Right lobe of liver (tissue), 6 donors: ENCODE measurements at regions of chr7 and their contacts with region 1.

Region 1: GRCh38 chr7:119184124-119184788 is 959.8 kb downstream of the ANKRD7 start:
- DNase-seq: no peak
- ATAC-seq: no peak
- H3K4me3 ChIP-seq: no peak overlapping the region
- H3K27ac ChIP-seq: no peak overlapping the region
- H3K4me1 ChIP-seq: no peaks in the 10 kb centered on the region
- H3K27me3 ChIP-seq: no peaks in the 10 kb centered on the region
- CTCF ChIP-seq: no peak
- POLR2A ChIP-seq: no peak

Region 2: GRCh38 chr7:118918556-118918955 is 265.7 kb before region 1 on chr7:
- intact Hi-C with region 1: loop called in 1 of 2 experiments (anchors 10 kb)
- DNase-seq: no peak
- ATAC-seq: peak in 3 of 4 donors; percentile 45 to 48 (median 46)
- H3K4me3 ChIP-seq: no peak overlapping the region
- H3K27ac ChIP-seq: no peak overlapping the region
- H3K4me1 ChIP-seq: no peaks in the 10 kb centered on the region
- H3K27me3 ChIP-seq: peaks cover 0 to 4% of the 10 kb centered on the region in 2 donors
- CTCF ChIP-seq: peak; percentile 31 to 60 (median 39)
- POLR2A ChIP-seq: no peak

Region 3: DNA sequence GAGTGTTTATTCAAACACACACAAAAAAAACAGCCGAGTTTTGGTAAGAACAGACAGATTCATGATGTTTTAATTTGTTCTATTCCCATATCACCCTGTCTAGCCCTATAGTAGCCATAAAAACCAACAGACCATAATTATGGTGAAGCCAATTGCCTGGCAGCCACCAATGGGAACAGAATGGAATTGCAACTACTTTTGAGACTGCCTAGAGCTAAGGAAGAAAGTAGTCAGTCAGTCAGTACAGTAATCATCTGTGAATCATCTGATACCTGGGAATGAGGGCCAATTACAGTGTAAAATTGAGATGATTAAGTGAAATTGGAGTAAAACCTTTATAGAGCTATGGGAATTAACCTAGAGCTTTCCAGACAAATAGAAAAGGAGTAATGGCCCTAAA is 136.1 kb after region 1 on chr7:
- intact Hi-C with region 1: no loop called
- DNase-seq: no peak
- ATAC-seq: no peak
- H3K4me3 ChIP-seq: no peak overlapping the region
- H3K27ac ChIP-seq: no peak overlapping the region
- H3K4me1 ChIP-seq: no peaks in the 10 kb centered on the region
- H3K27me3 ChIP-seq: no peaks in the 10 kb centered on the region
- CTCF ChIP-seq: no peak
- POLR2A ChIP-seq: no peak